Mammary epithelial cell (primary cell): ENCODE measurements at regions of chr17 and their contacts with region 1.

Region 1: GRCh38 chr17:40559954-40560591 is 5.2 kb downstream of the CCR7 start:
- DNase-seq: peak; percentile 90
- H3K4me3 ChIP-seq: no peak overlapping the region
- H3K27ac ChIP-seq: peak overlapping the region; percentile 30
- H3K4me1 ChIP-seq: peaks cover 15% of the 10 kb centered on the region
- H3K27me3 ChIP-seq: no peaks in the 10 kb centered on the region
- CTCF ChIP-seq: peak; percentile 99

Region 2: DNA sequence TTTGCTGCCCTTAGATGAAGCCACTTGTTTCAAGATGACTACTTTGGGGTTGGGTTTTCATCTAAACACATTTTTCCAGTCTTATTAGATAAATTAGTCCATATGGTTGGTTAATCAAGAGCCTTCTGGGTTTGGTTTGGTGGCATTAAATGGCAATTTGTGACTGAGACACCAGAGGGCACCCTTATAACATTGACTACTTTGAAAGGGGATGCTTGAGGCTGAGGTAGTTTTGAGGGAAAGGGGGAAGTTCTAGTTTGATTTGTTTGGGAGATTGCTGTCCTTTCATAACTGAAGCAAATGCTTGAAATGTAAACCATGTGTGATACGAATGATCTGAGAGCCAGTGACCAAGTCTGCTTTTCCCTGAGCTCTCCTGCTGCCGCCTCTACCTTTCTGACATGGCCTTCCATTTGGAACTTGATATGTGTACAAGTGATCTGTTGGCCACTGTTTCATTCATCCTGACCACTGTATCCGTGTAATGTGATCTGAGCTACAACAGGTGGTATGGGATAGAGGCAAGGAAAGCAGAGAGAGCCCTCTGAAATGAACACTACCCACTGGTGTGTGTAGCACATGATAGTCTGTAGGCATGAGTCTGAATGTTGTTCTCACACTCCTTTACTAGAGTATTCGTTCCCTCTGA is 256.9 kb before region 1 on chr17:
- CTCF ChIA-PET with region 1: no interaction called
- dilution Hi-C with region 1: no loop called
- in situ Hi-C with region 1: no loop called
- intact Hi-C with region 1: loop called (anchors 5 kb)
- DNase-seq: peak; percentile 45
- H3K4me3 ChIP-seq: no peak overlapping the region
- H3K27ac ChIP-seq: no peak overlapping the region
- H3K4me1 ChIP-seq: peaks cover 26% of the 10 kb centered on the region
- H3K27me3 ChIP-seq: no peaks in the 10 kb centered on the region
- CTCF ChIP-seq: peak; percentile 52 to 77

Region 3: GRCh38 chr17:40417609-40418427 is 142.3 kb before region 1 on chr17 and contains the start of gene TOP2A:
- CTCF ChIA-PET with region 1: interaction called, 4 read pairs
- dilution Hi-C with region 1: loop called (anchors 5 kb)
- in situ Hi-C with region 1: no loop called
- intact Hi-C with region 1: loop called (anchors 1 kb)
- DNase-seq: peak; percentile 100
- H3K4me3 ChIP-seq: peak within 1 kb of the TSS; percentile 81 to 98 (median 89)
- H3K27ac ChIP-seq: peak within 1 kb of the TSS; percentile 74
- H3K4me1 ChIP-seq: peaks cover 15% of the 10 kb centered on the region
- H3K27me3 ChIP-seq: no peaks in the 10 kb centered on the region
- CTCF ChIP-seq: no peak
- total RNA-seq, gene TOP2A: 3.2 to 93.3 TPM

Region 4: DNA sequence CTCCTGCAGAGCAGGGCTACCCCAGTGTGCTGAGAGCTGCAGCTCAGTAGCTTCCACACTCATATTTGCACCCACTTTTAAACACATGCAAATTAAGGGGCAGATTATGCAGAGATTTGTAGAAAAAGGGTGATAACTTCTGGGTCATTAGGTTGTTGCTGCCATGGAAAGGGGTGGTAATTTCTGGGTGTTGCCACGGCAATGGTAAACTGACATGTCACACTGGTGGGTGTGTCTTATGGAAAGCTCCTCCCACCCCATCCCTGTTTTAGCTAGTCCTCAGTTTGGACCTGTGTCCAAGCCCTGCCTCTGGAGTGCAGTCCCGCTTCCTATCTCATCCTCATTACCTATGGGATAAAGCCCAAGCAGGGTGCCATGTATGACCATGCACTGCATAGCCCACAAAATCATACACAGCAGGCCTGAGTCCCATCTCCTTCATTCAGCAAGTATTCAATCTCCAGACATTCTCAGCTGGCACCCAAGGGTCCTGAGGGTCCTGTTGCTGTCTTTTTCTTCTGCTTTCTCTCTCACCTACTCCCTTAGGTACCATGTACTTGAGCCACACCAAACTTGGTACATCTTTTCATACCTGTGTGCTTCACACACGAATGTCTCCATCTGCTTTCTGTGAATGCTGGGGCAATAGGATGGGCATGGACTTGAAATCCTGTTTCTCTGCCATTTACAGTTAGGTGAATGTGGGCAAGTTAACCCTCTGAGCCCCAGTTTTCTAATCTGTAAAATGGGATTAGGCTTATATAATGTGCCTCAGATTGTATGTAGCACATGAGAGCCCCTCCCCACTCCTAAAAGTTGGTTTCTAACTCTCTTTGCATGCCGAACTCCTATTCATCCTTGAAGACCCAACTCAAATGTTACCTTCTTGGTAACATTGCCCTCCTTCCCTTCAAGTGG is 87.3 kb before region 1 on chr17:
- CTCF ChIA-PET with region 1: interaction called, 3 read pairs
- dilution Hi-C with region 1: no loop called
- in situ Hi-C with region 1: no loop called
- intact Hi-C with region 1: loop called (anchors 1 kb)
- DNase-seq: peak; percentile 85
- H3K4me3 ChIP-seq: no peak overlapping the region
- H3K27ac ChIP-seq: peak overlapping the region; percentile 23
- H3K4me1 ChIP-seq: peaks cover 15% of the 10 kb centered on the region
- H3K27me3 ChIP-seq: no peaks in the 10 kb centered on the region
- CTCF ChIP-seq: no peak

Region 5: GRCh38 chr17:40531051-40531991 is 28.8 kb before region 1 on chr17:
- CTCF ChIA-PET with region 1: interaction called, 5 read pairs
- dilution Hi-C with region 1: no loop called
- in situ Hi-C with region 1: no loop called
- intact Hi-C with region 1: loop called (anchors 1 kb)
- DNase-seq: no peak
- H3K4me3 ChIP-seq: no peak overlapping the region
- H3K27ac ChIP-seq: peak overlapping the region; percentile 36
- H3K4me1 ChIP-seq: peaks cover 36% of the 10 kb centered on the region
- H3K27me3 ChIP-seq: no peaks in the 10 kb centered on the region
- CTCF ChIP-seq: no peak

Region 6: GRCh38 chr17:41211845-41212466 is 651.9 kb after region 1 on chr17:
- CTCF ChIA-PET with region 1: no interaction called
- dilution Hi-C with region 1: loop called (anchors 10 kb)
- in situ Hi-C with region 1: no loop called
- intact Hi-C with region 1: no loop called
- DNase-seq: peak; percentile 71
- H3K4me3 ChIP-seq: no peak overlapping the region
- H3K27ac ChIP-seq: no peak overlapping the region
- H3K4me1 ChIP-seq: peaks cover 4% of the 10 kb centered on the region
- H3K27me3 ChIP-seq: peaks cover 2% of the 10 kb centered on the region
- CTCF ChIP-seq: no peak